HEK293T (cell line): ENCODE measurements at regions of chr2 and their contacts with region 1.

Region 1: GRCh38 chr2:94874277-94875008 is 3.2 kb downstream of the TEKT4 start:
- DNase-seq: peak; percentile 86

Region 2: GRCh38 chr2:94956797-94957391 is 82.5 kb after region 1 on chr2:
- CTCF ChIA-PET with region 1: interaction called, 12 read pairs
- POLR2A ChIA-PET with region 1: no interaction called
- DNase-seq: peak; percentile 65